Posterior vena cava (tissue), 2 donors: ENCODE measurements at regions of chr17 and their contacts with region 1.

Region 1: GRCh38 chr17:68260051-68260762 is 12.4 kb downstream of the AMZ2 start:
- DNase-seq: no peak

Region 2: DNA sequence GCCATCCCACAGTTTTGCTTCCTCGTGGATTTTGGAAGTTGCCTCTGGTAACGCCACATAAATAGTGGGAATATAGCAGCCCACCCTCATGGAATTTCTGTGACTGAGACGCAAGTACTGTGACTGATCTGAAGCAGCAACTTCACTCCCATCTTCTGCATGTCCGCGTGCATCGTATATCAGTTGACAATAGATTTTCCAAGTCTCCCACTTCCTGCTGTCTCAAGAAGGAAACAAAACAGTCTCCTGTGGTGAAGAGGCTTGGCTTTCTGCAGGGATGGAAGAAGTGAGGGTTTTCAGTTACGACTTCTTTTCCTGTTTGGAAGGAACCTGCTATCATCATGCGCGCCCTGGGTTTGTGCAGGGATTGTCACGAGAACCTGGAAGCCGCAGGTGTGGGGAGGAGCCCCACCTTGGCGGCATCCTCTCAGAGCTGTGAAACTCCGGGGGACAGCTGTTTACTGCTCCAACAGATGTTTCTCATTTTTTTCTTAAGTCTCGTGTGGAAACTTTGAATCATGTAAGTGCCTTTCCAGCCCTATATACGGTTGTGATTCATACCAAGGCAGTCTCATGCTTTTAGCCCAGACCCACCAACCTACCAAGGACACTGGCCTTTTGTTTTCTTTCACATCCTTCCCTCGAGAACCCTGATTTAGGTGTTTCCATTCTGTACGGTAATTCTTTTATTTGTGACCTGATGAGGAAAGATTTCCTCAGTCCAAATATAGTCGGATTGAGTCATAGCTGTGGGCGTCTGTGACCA is 139.6 kb after region 1 on chr17:
- intact Hi-C with region 1: loop called in 1 of 2 experiments (anchors 5 kb)
- DNase-seq: no peak

Region 3: GRCh38 chr17:68435876-68436842 is 176.0 kb after region 1 on chr17:
- intact Hi-C with region 1: loop called in 1 of 2 experiments (anchors 10 kb)
- DNase-seq: no peak